ENCODE measurements at regions of chr16 and their contacts with region 1.

Region 1: GRCh38 chr16:58661199-58661830 is 23.3 kb downstream of the SLC38A7 start:
- DNase-seq: peak; percentile 56
- H3K4me3 ChIP-seq: no peak overlapping the region
- CTCF ChIP-seq: peak; percentile 67

Region 2: GRCh38 chr16:58494981-58495520 is 166.3 kb before region 1 on chr16:
- CTCF ChIA-PET with region 1: interaction called, 13 read pairs
- POLR2A ChIA-PET with region 1: no interaction called
- DNase-seq: peak; percentile 87
- H3K4me3 ChIP-seq: peak overlapping the region; percentile 19
- CTCF ChIP-seq: peak; percentile 83

Measured in AG04449 (cell line).